BJ (cell line): ENCODE measurements at regions of chr10 and their contacts with region 1.

Region 1: DNA sequence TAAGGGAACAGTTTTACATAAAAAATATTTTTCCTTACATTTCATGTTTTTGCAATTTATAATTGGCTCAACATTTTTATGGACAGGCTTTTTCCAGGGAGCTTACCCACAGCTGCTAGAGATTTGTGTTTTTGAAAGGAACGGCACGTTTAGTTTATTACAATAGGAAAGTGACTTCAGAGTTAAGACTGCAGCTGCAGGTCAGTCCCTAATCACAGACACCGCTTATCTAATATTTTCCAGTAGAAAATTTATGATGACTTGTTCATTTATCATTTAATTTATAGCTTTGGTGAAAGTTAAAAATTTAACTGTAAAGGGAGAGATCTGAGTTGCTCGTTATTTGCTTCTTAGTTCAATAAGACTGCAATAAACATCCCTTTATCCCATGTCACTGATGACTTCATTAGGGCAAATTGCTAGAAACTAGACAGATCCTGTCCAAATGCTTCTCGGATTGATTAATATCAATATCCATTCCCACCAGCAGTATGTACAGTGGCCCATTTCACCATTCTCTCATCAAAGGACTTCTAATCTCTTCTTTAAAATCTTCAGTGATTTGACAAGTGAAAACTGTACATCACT is 97.0 kb upstream of the ODAD2 start:
- DNase-seq: no peak
- H3K4me3 ChIP-seq: peak overlapping the region; percentile 10; the same call in 1 of the 2 replicates
- H3K27me3 ChIP-seq: no peaks in the 10 kb centered on the region
- CTCF ChIP-seq: no peak

Region 2: DNA sequence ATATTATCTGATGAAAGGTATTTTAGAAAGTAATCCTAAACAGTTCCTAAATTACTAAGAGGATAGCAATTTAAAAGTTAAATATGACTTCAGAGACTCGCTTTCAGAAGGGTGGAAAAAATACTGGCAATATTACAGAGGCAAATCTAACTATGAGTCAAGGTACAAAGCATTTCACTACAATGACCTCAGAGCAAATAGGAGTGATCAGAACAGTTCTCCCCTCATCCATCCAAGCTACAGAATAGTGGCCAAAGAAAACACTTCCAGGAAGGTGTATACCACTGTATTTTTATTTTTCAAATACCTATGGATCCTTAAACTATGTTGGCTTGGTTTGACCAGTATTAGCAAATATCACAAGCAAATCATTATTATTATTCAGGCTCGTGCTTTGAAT is 15.8 kb after region 1 on chr10:
- CTCF ChIA-PET with region 1: no interaction called
- POLR2A ChIA-PET with region 1: no interaction called
- DNase-seq: no peak
- H3K4me3 ChIP-seq: no peak overlapping the region
- H3K27me3 ChIP-seq: no peaks in the 10 kb centered on the region
- CTCF ChIP-seq: no peak

Region 3: DNA sequence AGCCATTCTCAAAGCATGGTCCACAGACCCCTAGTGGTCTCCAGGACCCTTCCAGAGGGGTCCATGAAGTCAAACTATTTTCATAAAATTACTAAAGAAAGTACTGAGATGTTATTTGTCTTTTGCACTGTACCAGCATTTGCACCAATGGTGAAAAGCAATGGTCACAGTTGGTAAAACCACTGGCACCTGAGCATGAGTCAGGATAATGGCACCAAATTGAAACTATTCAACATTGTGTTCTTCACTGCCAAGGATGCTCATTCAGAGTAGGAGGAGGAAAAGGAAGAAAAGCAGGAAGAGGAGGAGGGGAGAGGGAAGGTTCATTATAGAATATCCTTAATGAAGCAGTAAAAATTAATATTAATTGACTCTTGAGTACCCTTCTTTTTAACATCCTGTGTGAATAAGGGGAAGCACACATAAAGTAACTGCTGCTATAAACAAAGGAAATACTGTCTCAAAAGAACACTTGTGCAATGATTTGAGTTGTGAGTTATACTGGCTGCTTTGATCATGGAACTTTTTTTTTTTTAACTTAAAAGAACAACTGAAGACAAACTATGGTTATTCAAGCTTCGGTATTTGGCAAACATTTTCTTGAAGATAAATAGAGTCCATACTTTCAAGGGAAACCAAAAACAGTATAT is 146.8 kb after region 1 on chr10:
- CTCF ChIA-PET with region 1: no interaction called
- POLR2A ChIA-PET with region 1: interaction called, 11 read pairs
- DNase-seq: no peak
- H3K4me3 ChIP-seq: no peak overlapping the region
- H3K27me3 ChIP-seq: no peaks in the 10 kb centered on the region; the same call in 1 of the 2 replicates
- CTCF ChIP-seq: no peak